ENCODE measurements at regions of chr1 and their contacts with region 1.

Region 1: GRCh38 chr1:77725706-77726105 is 33.9 kb downstream of the USP33 start:
- DNase-seq: no peak
- ATAC-seq: no peak
- H3K4me3 ChIP-seq: no peak overlapping the region
- H3K27ac ChIP-seq: no peak overlapping the region
- H3K4me1 ChIP-seq: no peaks in the 10 kb centered on the region
- H3K27me3 ChIP-seq: no peaks in the 10 kb centered on the region

Region 2: GRCh38 chr1:77370583-77371306 is 355.0 kb before region 1 on chr1:
- intact Hi-C with region 1: no loop called
- DNase-seq: no peak
- ATAC-seq: no peak
- H3K4me3 ChIP-seq: no peak overlapping the region
- H3K27ac ChIP-seq: no peak overlapping the region
- H3K4me1 ChIP-seq: no peaks in the 10 kb centered on the region
- H3K27me3 ChIP-seq: no peaks in the 10 kb centered on the region

Region 3: GRCh38 chr1:77514921-77515776 is 210.6 kb before region 1 on chr1:
- intact Hi-C with region 1: no loop called
- DNase-seq: peak; percentile 44 to 80 (median 73)
- ATAC-seq: peak; percentile 84 to 90
- H3K4me3 ChIP-seq: no peak overlapping the region
- H3K27ac ChIP-seq: peak overlapping the region; percentile 17
- H3K4me1 ChIP-seq: no peaks in the 10 kb centered on the region
- H3K27me3 ChIP-seq: no peaks in the 10 kb centered on the region

Region 4: DNA sequence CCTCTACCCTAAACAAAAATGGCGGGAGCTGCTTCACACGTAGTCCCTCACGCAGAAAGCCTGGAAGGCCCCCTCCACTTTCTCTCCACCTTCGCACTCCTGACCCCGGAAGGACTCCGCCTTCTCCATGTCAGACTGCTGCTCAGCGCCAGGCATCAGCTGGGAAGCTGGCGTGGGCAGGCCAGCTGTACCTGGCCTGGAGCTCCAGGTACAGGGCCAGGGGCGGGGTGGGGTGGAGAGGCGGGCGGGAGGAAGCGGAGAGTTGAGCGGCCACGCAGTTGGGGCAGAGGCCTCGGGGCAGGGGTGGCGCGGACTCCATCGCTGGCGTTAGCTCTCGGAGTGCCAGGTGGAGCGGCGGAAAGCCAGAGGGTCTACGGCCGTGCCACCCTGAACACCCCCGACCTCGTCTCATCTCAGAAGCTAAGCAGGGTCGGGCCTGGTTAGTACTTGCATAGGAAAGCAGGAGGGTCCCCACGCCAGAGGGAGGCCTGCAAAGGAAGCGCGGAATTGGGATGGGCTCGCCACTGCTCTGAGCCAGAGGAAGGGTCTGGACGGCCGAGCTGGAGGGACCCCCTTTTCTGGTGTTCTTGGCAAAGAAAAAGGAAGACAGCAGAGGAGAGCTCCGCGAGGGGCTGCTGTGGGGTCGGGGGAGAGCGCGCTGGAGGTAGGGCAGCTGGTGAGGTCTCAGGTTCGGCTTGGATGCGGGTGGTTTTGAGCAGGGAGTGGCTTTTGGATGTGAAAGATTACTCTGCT is 54.0 kb after region 1 on chr1 and contains the start of gene MIGA1:
- intact Hi-C with region 1: no loop called
- DNase-seq: peak; percentile 88 to 92 (median 92)
- ATAC-seq: peak; percentile 99 to 100
- H3K4me3 ChIP-seq: peak within 1 kb of the TSS; percentile 96
- H3K27ac ChIP-seq: peak within 1 kb of the TSS; percentile 66
- H3K4me1 ChIP-seq: peaks cover 2% of the 10 kb centered on the region
- H3K27me3 ChIP-seq: no peaks in the 10 kb centered on the region
- total RNA-seq, gene MIGA1: 12.4 to 15.1 (median 12.9) TPM

Region 5: GRCh38 chr1:77961392-77961791 is 235.7 kb after region 1 on chr1:
- intact Hi-C with region 1: loop called in 1 of 4 experiments (anchors 10 kb)
- DNase-seq: no peak
- ATAC-seq: no peak
- H3K4me3 ChIP-seq: no peak overlapping the region
- H3K27ac ChIP-seq: no peak overlapping the region
- H3K4me1 ChIP-seq: no peaks in the 10 kb centered on the region
- H3K27me3 ChIP-seq: no peaks in the 10 kb centered on the region

Measured in right cardiac atrium (tissue), 5 donors.